ENCODE measurements at regions of chr3 and their contacts with region 1.

Region 1: DNA sequence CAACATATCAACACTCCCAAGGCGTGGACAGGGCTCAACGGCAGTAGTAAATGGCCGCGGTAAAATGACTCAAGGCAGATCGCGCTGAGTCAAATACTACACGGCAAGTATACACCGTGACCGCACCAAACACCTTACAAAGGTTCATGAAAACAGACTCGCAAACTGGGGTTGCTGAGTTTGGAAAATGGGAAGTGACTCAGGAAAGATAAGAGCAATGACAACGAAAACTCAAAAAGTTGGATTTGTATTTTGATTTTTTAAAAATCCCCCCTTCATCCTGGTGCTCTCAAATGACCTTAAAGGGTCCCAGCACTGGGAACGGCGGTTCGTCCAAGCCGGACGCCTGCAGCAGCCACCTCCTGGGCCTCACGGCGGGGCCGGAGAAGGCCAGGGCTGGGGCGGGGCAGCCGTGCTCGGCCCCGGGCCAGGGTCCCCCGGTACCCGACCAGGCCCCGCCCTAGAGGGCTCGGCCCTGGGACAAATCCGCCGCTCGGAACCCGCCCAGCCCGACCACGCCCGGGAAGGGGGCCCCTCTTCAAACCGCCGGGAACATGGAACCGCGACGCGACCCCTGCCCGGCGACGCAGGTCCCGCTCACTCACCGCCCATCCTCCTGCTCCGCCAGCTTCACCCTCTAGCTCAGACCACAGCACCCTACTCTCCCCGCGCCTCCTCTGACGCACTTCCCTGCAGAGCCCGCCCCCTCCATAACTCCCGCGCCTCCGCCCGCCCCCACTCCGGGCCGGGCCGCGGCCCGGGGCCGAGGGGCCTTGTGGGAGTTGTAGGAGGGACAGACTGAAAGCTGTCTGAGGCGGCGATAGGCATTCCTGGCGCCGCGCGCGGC is at the start of gene CLDND1:
- DNase-seq: peak; percentile 97
- ATAC-seq: peak; percentile 95
- H3K4me3 Mint-ChIP-seq: peak within 1 kb of the TSS; percentile 93
- H3K27ac Mint-ChIP-seq: peak within 1 kb of the TSS; percentile 97
- H3K4me1 Mint-ChIP-seq: peaks cover 60% of the 10 kb centered on the region
- H3K27me3 Mint-ChIP-seq: no peaks in the 10 kb centered on the region
- total RNA-seq, gene CLDND1: 410 to 414 TPM

Region 2: DNA sequence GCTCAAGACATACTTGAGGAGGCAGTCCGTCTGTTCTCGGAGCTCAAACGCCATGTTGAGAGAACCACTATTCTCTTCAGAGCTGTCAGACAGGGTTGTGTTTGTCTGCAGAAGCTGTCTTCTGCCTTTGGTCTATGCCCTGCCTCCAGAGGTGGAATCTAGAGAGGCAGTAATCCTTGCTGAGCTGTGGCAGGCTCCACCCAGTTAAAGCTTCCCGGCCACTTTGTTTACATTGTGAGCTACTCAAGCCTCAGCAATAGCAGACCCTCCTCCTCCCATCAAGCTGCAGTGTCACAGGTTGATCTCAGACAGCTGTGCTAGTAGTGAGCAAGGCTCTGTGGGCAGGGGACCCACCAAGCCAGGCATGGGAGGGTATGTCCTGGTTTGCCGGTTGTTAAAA is 426.6 kb before region 1 on chr3:
- CTCF ChIA-PET with region 1: no interaction called
- POLR2A ChIA-PET with region 1: no interaction called
- DNase-seq: no peak
- ATAC-seq: no peak
- H3K4me3 Mint-ChIP-seq: no peak overlapping the region
- H3K27ac Mint-ChIP-seq: no peak overlapping the region
- H3K4me1 Mint-ChIP-seq: no peaks in the 10 kb centered on the region
- H3K27me3 Mint-ChIP-seq: no peaks in the 10 kb centered on the region

Region 3: DNA sequence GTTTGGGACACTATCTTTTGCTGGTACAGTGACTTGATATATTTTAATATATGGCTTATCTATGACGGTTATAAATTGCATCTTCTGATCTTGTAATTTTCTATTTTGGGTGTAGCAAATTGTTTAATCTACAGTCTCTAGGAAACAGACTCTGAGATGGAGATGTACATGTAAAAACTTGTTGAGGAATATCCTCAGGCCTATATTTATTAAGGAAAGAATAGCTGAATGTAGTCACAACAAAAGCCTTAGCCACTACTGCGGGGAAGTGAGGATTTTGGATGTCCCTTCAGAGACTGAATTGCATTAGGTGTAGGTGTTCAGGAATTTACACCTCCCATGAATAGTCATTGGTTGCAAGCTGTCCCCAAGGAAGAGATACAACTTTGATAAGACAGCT is 145.8 kb before region 1 on chr3:
- CTCF ChIA-PET with region 1: no interaction called
- POLR2A ChIA-PET with region 1: no interaction called
- DNase-seq: no peak
- ATAC-seq: no peak
- H3K4me3 Mint-ChIP-seq: no peak overlapping the region
- H3K27ac Mint-ChIP-seq: no peak overlapping the region
- H3K4me1 Mint-ChIP-seq: peaks cover 10% of the 10 kb centered on the region
- H3K27me3 Mint-ChIP-seq: peaks cover 25% of the 10 kb centered on the region

Region 4: DNA sequence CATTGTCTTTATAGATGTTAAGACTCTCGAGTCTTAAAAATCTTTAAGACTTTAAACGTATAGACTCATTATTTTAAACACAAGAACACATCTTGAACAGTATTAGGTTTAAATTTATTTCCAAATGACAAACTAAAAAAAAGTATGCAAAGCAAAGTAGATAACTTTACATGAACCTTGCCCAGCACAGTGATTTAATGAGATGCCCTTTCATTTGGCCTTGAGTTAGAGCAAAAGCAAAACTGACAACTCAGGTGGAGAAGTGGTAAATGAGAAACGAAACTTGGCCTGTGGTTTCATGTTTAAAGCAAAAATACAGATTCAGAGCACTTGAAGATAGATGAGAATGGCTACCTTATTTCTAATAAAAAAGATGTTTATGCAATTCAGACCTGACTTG is 17.9 kb after region 1 on chr3:
- CTCF ChIA-PET with region 1: interaction called, 3 read pairs
- POLR2A ChIA-PET with region 1: interaction called, 54 read pairs
- DNase-seq: peak; percentile 54
- ATAC-seq: peak; percentile 61
- H3K4me3 Mint-ChIP-seq: peak overlapping the region; percentile 24
- H3K27ac Mint-ChIP-seq: peak overlapping the region; percentile 79
- H3K4me1 Mint-ChIP-seq: peaks cover 67% of the 10 kb centered on the region
- H3K27me3 Mint-ChIP-seq: no peaks in the 10 kb centered on the region

Region 5: DNA sequence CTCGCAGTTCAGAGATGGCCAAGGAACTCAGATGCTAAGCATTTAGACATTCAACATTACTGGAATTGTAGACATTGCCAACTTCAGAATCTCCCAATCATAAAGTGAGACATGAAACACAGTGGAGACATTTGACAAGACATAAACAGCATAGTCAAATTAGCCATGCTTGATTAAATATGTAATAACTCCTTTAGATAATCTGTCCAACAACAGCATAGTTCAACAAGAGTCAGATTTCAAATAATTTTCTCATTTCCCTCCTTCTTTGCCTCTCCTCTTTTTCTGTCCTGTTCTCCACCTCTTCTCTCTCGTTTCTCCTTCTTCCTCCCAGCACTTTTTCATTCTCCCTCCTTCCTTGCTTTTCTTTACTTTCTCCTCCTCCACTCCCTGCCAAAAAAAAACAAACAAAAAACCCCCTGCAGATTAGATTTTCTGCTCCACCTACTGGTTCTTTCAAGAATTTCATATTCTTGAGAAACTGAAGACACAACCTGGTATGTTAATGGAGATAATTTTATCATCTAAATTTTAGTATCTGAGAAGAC is 50.8 kb after region 1 on chr3:
- CTCF ChIA-PET with region 1: interaction called, 22 read pairs
- POLR2A ChIA-PET with region 1: interaction called, 18 read pairs
- DNase-seq: no peak
- ATAC-seq: peak; percentile 59
- H3K4me3 Mint-ChIP-seq: peak overlapping the region; percentile 32
- H3K27ac Mint-ChIP-seq: peak overlapping the region; percentile 81
- H3K4me1 Mint-ChIP-seq: peaks cover 68% of the 10 kb centered on the region
- H3K27me3 Mint-ChIP-seq: no peaks in the 10 kb centered on the region

Measured in activated CD8-positive, alpha-beta T cell treated with anti-CD3 and anti-CD28 coated beads, Interleukin-2, amount 10 ng/mL, durations not matched to agents 7 days and 5 days (primary cell).